Endothelial cell of umbilical vein (primary cell): ENCODE measurements at regions of chr1 and their contacts with region 1.

Region 1: GRCh38 chr1:78607334-78607927 is 12.8 kb upstream of the IFI44L start:
- DNase-seq: peak; percentile 39
- H3K4me3 ChIP-seq: no peak overlapping the region
- H3K27ac ChIP-seq: no peak overlapping the region
- H3K4me1 ChIP-seq: no peaks in the 10 kb centered on the region
- H3K27me3 ChIP-seq: peaks cover 0 to 2% of the 10 kb centered on the region in 2 experiments
- CTCF ChIP-seq: peak; percentile 26 to 37
- POLR2A ChIP-seq: no peak

Region 2: DNA sequence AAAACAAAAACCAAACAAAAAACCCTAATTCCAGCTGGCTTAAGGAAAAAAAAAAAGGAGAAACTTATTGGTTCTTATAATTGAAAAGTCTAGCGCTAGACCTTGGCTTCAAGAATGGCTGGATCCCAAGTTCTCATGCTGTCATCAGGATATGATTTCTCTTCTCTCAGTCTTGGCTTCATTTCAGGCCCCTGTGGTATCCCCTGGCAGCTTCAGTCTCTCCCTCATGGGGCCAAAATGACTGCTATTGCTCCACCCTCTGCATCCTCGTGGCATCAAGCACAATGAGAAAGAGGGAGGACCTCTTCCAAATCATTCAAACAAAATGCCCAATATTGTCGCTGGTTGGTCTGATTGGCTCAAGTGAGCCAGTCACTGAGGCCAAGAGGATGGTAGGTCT is 480.9 kb before region 1 on chr1:
- CTCF ChIA-PET with region 1: interaction called, 97 read pairs
- POLR2A ChIA-PET with region 1: no interaction called
- dilution Hi-C with region 1: no loop called
- intact Hi-C with region 1: loop called (anchors 1 kb)
- DNase-seq: no peak
- H3K4me3 ChIP-seq: no peak overlapping the region
- H3K27ac ChIP-seq: no peak overlapping the region
- H3K4me1 ChIP-seq: no peaks in the 10 kb centered on the region
- H3K27me3 ChIP-seq: no peaks in the 10 kb centered on the region
- CTCF ChIP-seq: no peak
- POLR2A ChIP-seq: no peak

Region 3: DNA sequence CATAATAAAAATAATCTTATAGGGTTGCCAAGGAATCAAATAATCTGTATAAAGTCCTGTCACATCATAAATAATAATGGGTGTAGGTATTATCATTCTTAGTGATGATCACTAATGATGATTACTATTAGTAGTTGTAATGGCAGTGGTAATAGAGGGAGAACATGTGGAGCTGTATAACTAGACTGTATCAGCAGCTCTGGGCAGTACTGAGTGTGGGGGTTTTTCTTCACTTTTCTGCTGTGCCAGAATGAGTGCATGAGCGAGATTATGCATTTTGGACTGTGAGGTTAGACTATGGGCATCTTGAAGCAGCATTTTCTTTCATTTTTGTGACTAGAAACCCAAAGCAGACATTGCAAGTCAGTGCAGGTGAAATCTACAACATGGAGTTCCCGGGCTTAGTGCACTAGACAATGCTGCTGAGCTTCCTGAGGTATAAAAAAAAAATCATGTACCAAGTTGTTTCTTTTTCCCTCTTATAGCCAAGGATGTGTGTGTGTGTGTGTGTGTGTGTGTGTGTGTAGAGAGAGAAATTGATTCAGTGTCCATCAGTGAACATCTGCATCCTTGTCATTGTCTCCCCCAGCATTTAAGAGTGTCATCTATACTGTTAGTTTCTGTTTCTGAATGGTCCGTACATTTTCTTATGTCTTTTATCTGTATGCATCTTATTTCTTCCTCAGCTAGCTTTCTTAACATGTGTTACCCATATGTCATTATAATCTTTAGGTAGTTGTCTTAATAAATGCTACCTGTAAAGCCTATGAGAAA is 475.1 kb before region 1 on chr1:
- CTCF ChIA-PET with region 1: interaction called, 97 read pairs
- POLR2A ChIA-PET with region 1: no interaction called
- dilution Hi-C with region 1: no loop called
- intact Hi-C with region 1: loop called (anchors 1 kb)
- DNase-seq: no peak
- H3K4me3 ChIP-seq: no peak overlapping the region
- H3K27ac ChIP-seq: no peak overlapping the region
- H3K4me1 ChIP-seq: no peaks in the 10 kb centered on the region
- H3K27me3 ChIP-seq: no peaks in the 10 kb centered on the region
- CTCF ChIP-seq: no peak
- POLR2A ChIP-seq: no peak

Region 4: GRCh38 chr1:78419309-78419708 is 188.1 kb before region 1 on chr1:
- CTCF ChIA-PET with region 1: interaction called, 8 read pairs
- POLR2A ChIA-PET with region 1: no interaction called
- dilution Hi-C with region 1: no loop called
- intact Hi-C with region 1: loop called (anchors 10 kb)
- DNase-seq: no peak
- H3K4me3 ChIP-seq: no peak overlapping the region
- H3K27ac ChIP-seq: no peak overlapping the region
- H3K4me1 ChIP-seq: no peaks in the 10 kb centered on the region
- H3K27me3 ChIP-seq: peaks cover 0 to 3% of the 10 kb centered on the region in 2 experiments
- CTCF ChIP-seq: no peak
- POLR2A ChIP-seq: no peak

Region 5: DNA sequence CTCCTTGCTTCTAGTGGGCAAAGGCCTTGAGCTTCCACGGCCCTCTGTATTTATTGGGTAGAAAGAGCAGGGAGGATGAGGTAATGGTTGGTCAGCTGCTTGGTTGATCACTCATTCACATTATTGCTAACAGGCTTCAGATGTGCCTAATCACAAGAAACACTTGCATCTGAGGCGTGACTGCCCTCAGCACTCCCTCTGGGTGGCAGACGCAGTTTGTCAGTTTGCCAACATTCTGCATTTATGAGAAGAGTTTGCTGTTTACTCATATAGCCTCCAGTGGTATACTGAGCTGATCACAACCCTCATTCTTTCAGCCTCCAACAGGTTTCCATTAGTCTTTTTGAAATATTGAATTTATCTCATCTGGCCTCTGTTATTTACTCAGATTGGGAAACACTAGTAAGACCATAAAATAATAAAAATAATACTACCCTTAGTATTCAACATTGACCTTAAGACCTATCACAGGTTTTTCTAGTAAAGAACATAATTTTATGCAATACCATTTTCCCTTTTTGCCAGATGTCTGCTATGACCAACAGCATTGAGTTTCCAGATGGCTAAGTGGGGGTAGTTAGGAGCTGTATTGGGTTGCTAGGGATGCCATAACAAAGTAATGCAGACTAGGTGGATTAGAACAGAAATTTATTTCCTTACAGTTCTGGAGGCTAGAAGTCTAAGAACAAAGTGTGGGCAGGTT is 63.3 kb before region 1 on chr1:
- CTCF ChIA-PET with region 1: no interaction called
- POLR2A ChIA-PET with region 1: no interaction called
- dilution Hi-C with region 1: no loop called
- intact Hi-C with region 1: no loop called
- DNase-seq: no peak
- H3K4me3 ChIP-seq: no peak overlapping the region
- H3K27ac ChIP-seq: no peak overlapping the region
- H3K4me1 ChIP-seq: no peaks in the 10 kb centered on the region
- H3K27me3 ChIP-seq: peaks cover 0 to 25% of the 10 kb centered on the region in 2 experiments
- CTCF ChIP-seq: no peak
- POLR2A ChIP-seq: no peak

Region 6: GRCh38 chr1:78633209-78633608 is 25.8 kb after region 1 on chr1:
- CTCF ChIA-PET with region 1: no interaction called
- POLR2A ChIA-PET with region 1: no interaction called
- dilution Hi-C with region 1: no loop called
- intact Hi-C with region 1: no loop called
- DNase-seq: no peak
- H3K4me3 ChIP-seq: no peak overlapping the region
- H3K27ac ChIP-seq: no peak overlapping the region
- H3K4me1 ChIP-seq: no peaks in the 10 kb centered on the region
- H3K27me3 ChIP-seq: no peaks in the 10 kb centered on the region
- CTCF ChIP-seq: no peak
- POLR2A ChIP-seq: no peak